ENCODE measurements at regions of chr14 and their contacts with region 1.

Region 1: GRCh38 chr14:69695322-69696203 is 71.4 kb upstream of the SRSF5 start:
- DNase-seq: peak in 2 of 4 experiments; percentile 30 to 54
- ATAC-seq: peak; percentile 21
- H3K4me3 ChIP-seq: no peak overlapping the region
- H3K27ac ChIP-seq: peak overlapping the region; percentile 97
- H3K4me1 ChIP-seq: peaks cover 25 to 70% of the 10 kb centered on the region in 2 experiments
- H3K27me3 ChIP-seq: no peaks in the 10 kb centered on the region
- CTCF ChIP-seq: no peak
- EP300 ChIP-seq: no peak
- POLR2A ChIP-seq: no peak
- RAD21 ChIP-seq: no peak

Region 2: GRCh38 chr14:69153873-69154270 is 541.7 kb before region 1 on chr14:
- CTCF ChIA-PET with region 1: no interaction called
- POLR2A ChIA-PET with region 1: no interaction called
- in situ Hi-C with region 1: no loop called
- intact Hi-C with region 1: no loop called
- DNase-seq: peak in 1 of 4 experiments; percentile 45
- ATAC-seq: no peak
- H3K4me3 ChIP-seq: peak overlapping the region; percentile 90
- H3K27ac ChIP-seq: peak overlapping the region; percentile 66
- H3K4me1 ChIP-seq: peaks cover 19 to 20% of the 10 kb centered on the region in 2 experiments; a peak in 4 of 5 replicates
- H3K27me3 ChIP-seq: no peaks in the 10 kb centered on the region
- CTCF ChIP-seq: no peak
- EP300 ChIP-seq: no peak
- POLR2A ChIP-seq: no peak
- RAD21 ChIP-seq: no peak

Region 3: GRCh38 chr14:69611201-69612011 is 84.2 kb before region 1 on chr14 and contains the start of gene SUSD6:
- CTCF ChIA-PET with region 1: no interaction called
- POLR2A ChIA-PET with region 1: no interaction called
- in situ Hi-C with region 1: no loop called
- intact Hi-C with region 1: loop called (anchors 5 kb)
- DNase-seq: peak; percentile 89 to 93 (median 91)
- ATAC-seq: peak; percentile 87
- H3K4me3 ChIP-seq: peak within 1 kb of the TSS; percentile 74
- H3K27ac ChIP-seq: peak within 1 kb of the TSS; percentile 77
- H3K4me1 ChIP-seq: peaks cover 23 to 36% of the 10 kb centered on the region in 2 experiments
- H3K27me3 ChIP-seq: no peaks in the 10 kb centered on the region
- CTCF ChIP-seq: no peak
- EP300 ChIP-seq: no peak
- POLR2A ChIP-seq: no peak
- RAD21 ChIP-seq: no peak
- polyA plus RNA-seq, gene SUSD6: 2.9 to 5.6 TPM

Region 4: DNA sequence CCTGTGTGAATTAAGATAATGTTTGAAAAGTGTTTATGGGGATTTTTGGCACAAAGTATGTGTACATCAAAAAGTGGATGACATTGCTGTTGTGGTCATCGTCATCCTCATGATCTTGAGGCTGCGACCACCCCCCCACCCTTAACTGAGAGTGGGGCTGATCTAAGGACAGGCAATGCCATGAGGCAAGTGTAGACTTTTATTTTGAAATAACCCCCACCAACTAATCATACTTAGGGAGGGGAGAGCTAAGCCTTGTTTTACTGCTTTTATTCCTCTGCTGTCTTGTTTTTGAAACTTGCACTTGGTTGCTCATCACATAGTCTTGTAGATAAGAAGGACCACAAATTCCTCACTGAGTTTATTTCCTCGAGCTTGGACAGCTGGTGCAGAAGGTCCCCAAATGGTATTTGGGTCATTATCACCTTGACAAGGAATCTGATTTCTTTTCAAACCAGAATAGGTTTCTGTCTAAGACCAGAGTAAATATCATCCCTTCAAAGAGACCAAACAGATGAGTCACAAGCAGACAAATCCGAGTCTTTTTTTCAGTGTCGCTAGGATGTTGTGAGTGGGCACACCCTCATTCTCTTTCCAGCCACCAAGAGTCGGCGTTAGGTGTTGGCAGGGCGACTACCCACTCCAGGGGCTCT is 159.7 kb after region 1 on chr14:
- CTCF ChIA-PET with region 1: no interaction called
- POLR2A ChIA-PET with region 1: no interaction called
- in situ Hi-C with region 1: no loop called
- intact Hi-C with region 1: no loop called
- DNase-seq: no peak
- ATAC-seq: no peak
- H3K4me3 ChIP-seq: no peak overlapping the region
- H3K27ac ChIP-seq: no peak overlapping the region
- H3K4me1 ChIP-seq: no peaks in the 10 kb centered on the region
- H3K27me3 ChIP-seq: peaks cover 3 to 15% of the 10 kb centered on the region in 2 experiments; a peak in 4 of 5 replicates
- CTCF ChIP-seq: no peak
- EP300 ChIP-seq: no peak
- POLR2A ChIP-seq: no peak
- RAD21 ChIP-seq: no peak

Region 5: DNA sequence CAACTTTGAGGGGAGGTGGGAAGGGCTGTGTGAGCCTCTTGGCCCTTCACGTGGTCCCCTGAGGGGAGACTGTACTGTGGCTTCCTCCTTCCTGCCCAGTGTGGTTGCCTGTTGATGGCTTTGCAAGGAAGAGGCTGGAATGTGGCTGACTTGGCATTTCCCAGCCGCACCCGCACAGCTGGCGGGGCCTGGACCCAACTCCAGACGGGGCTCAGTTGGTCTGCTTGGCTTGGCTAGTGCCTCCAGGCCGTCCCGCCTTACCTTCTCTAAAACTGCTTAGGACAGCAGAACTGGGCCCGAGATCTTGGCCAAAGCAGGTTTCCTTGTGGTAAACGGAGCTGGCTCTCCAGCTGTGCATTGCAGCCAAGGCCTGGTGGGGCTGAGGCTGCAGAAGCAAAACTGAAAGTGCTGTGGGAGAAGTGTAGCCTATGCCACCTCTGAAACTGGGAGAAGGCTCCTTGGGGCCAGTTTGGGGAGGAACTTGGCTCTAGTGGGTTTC is 323.2 kb after region 1 on chr14:
- CTCF ChIA-PET with region 1: no interaction called
- POLR2A ChIA-PET with region 1: no interaction called
- in situ Hi-C with region 1: no loop called
- intact Hi-C with region 1: no loop called
- DNase-seq: no peak
- ATAC-seq: no peak
- H3K4me3 ChIP-seq: no peak overlapping the region
- H3K27ac ChIP-seq: no peak overlapping the region
- H3K4me1 ChIP-seq: no peaks in the 10 kb centered on the region
- H3K27me3 ChIP-seq: peaks cover 0 to 11% of the 10 kb centered on the region in 2 experiments; a peak in 2 of 5 replicates
- CTCF ChIP-seq: no peak
- EP300 ChIP-seq: no peak
- POLR2A ChIP-seq: no peak
- RAD21 ChIP-seq: no peak

Region 6: GRCh38 chr14:70036665-70037064 is 341.1 kb after region 1 on chr14:
- CTCF ChIA-PET with region 1: no interaction called
- POLR2A ChIA-PET with region 1: no interaction called
- in situ Hi-C with region 1: no loop called
- intact Hi-C with region 1: no loop called
- DNase-seq: no peak
- ATAC-seq: 0 out of 3 replicates have a peak, but pooled peaks have one; percentile 39
- H3K4me3 ChIP-seq: no peak overlapping the region
- H3K27ac ChIP-seq: no peak overlapping the region
- H3K4me1 ChIP-seq: no peaks in the 10 kb centered on the region
- H3K27me3 ChIP-seq: no peaks in the 10 kb centered on the region
- CTCF ChIP-seq: peak in 2 of 3 experiments; percentile 24 to 25; a peak in 2 of 6 replicates
- EP300 ChIP-seq: no peak
- POLR2A ChIP-seq: no peak
- RAD21 ChIP-seq: 0 out of 4 replicates have a peak, but pooled peaks of 1 of the 2 experiments have one; percentile 9

Measured in K562 (cell line).